Naive thymus-derived CD8-positive, alpha-beta T cell (primary cell): ENCODE measurements at regions of chr16 and their contacts with region 1.

Region 1: GRCh38 chr16:96935-97381 is 18.9 kb downstream of the MPG start:
- DNase-seq: peak; percentile 85 to 93 (median 90)
- ATAC-seq: peak; percentile 99
- H3K4me3 Mint-ChIP-seq: no peak overlapping the region
- H3K27ac Mint-ChIP-seq: peak overlapping the region in 2 of 10 donors; percentile 11 to 75
- H3K4me1 Mint-ChIP-seq: peaks cover 7 to 12% (median 8%) of the 10 kb centered on the region in 4 donors
- H3K27me3 Mint-ChIP-seq: no peaks in the 10 kb centered on the region

Region 2: GRCh38 chr16:65671-66137 is 31.3 kb before region 1 on chr16:
- POLR2A ChIA-PET with region 1: interaction called, 18 read pairs
- DNase-seq: peak; percentile 64 to 88 (median 80)
- ATAC-seq: peak; percentile 97 to 98
- H3K4me3 Mint-ChIP-seq: no peak overlapping the region
- H3K27ac Mint-ChIP-seq: peak overlapping the region in 1 of 10 donors; percentile 11
- H3K4me1 Mint-ChIP-seq: peaks cover 0 to 5% (median 3%) of the 10 kb centered on the region in 4 donors
- H3K27me3 Mint-ChIP-seq: peaks cover 5 to 21% (median 9%) of the 10 kb centered on the region in 5 donors

Region 3: DNA sequence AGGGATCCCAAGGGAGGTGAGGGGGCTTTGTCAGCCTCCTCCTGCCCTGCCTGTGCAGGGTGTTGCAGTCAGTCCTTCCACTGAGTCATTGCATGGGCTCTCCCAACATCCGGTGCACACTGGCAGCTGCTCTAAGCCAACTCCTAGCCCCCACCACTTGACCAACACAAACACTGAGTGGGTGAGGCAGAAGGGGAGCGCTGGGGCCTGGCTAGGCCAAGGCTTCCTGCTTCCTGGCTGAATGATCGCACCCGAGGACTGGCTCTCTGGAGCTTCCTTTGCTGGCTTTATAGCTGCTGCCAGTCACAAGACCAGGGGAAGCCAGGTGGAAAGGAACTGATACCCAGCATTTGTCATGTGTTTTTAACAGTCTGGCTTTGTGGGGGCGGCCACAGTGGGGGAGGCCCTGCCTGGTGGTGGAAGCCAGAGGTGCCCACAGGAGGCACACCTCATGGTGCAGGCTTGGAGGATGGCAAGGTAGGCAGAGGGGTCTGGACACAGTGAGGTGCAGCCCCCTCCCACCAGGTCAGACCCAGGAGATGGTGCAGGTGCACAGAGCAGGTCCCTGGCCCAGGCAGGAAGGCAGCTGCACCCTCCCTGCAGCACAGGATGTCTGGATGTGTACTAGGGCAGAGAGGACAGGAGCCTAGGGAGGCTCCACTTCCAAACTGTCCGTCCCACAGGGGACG is 12.1 kb before region 1 on chr16:
- POLR2A ChIA-PET with region 1: interaction called, 10 read pairs
- DNase-seq: peak in 4 of 10 donors; percentile 29 to 71 (median 41)
- ATAC-seq: peak; percentile 72 to 74
- H3K4me3 Mint-ChIP-seq: peak overlapping the region; percentile 6 to 66 (median 60)
- H3K27ac Mint-ChIP-seq: peak overlapping the region; percentile 67 to 93 (median 82)
- H3K4me1 Mint-ChIP-seq: peaks cover 20 to 35% (median 35%) of the 10 kb centered on the region in 4 donors
- H3K27me3 Mint-ChIP-seq: no peaks in the 10 kb centered on the region

Region 4: DNA sequence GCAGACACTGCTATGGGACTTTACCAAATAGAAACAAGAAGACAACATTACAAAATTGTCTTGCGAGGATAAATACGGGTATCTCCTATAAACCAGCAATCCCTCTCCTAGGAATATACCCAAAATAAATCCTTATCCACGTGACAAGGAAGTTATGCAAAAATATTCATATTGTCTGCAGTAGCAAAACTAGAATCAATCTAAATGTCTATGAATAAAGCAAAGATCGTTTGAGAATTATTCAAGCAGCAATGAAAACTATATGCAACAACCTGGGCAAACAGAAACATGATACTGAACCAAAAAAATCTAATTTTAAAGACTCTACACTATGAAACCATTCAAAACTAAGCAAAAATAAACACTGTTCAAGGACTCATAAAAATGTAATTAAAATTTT is 123.1 kb after region 1 on chr16:
- POLR2A ChIA-PET with region 1: no interaction called
- DNase-seq: no peak
- ATAC-seq: no peak
- H3K4me3 Mint-ChIP-seq: no peak overlapping the region
- H3K27ac Mint-ChIP-seq: no peak overlapping the region
- H3K4me1 Mint-ChIP-seq: peaks cover 4 to 23% (median 9%) of the 10 kb centered on the region in 4 donors
- H3K27me3 Mint-ChIP-seq: no peaks in the 10 kb centered on the region

Region 5: GRCh38 chr16:234468-235305 is 137.7 kb after region 1 on chr16 and contains the start of gene FAM234A:
- POLR2A ChIA-PET with region 1: no interaction called
- DNase-seq: peak; percentile 90 to 99 (median 96)
- ATAC-seq: peak; percentile 86 to 90
- H3K4me3 Mint-ChIP-seq: peak within 1 kb of the TSS; percentile 90 to 99 (median 96)
- H3K27ac Mint-ChIP-seq: peak within 1 kb of the TSS; percentile 94 to 100 (median 100)
- H3K4me1 Mint-ChIP-seq: peaks cover 11 to 21% (median 17%) of the 10 kb centered on the region in 4 donors
- H3K27me3 Mint-ChIP-seq: no peaks in the 10 kb centered on the region
- polyA plus RNA-seq, gene FAM234A: 18.8 to 46.4 (median 34.4) TPM